CD14-positive monocyte (primary cell): ENCODE measurements at regions of chr13 and their contacts with region 1.

Region 1: GRCh38 chr13:41188584-41188983 is 5.8 kb downstream of the KBTBD7 start:
- DNase-seq: no peak
- H3K4me3 ChIP-seq: no peak overlapping the region
- H3K4me3 Mint-ChIP-seq: no peak overlapping the region
- H3K27ac ChIP-seq: no peak overlapping the region
- H3K27ac Mint-ChIP-seq: no peak overlapping the region
- H3K4me1 ChIP-seq: peaks cover 2 to 5% of the 10 kb centered on the region in 2 donors
- H3K4me1 Mint-ChIP-seq: peaks cover 19% of the 10 kb centered on the region
- H3K27me3 ChIP-seq: no peaks in the 10 kb centered on the region
- H3K27me3 Mint-ChIP-seq: no peaks in the 10 kb centered on the region
- CTCF ChIP-seq: no peak

Region 2: GRCh38 chr13:41145146-41145908 is 43.3 kb before region 1 on chr13:
- intact Hi-C with region 1: loop called in 1 of 2 experiments (anchors 5 kb)
- DNase-seq: no peak
- H3K4me3 ChIP-seq: no peak overlapping the region
- H3K4me3 Mint-ChIP-seq: no peak overlapping the region
- H3K27ac ChIP-seq: no peak overlapping the region
- H3K27ac Mint-ChIP-seq: no peak overlapping the region
- H3K4me1 ChIP-seq: no peaks in the 10 kb centered on the region
- H3K4me1 Mint-ChIP-seq: no peaks in the 10 kb centered on the region
- H3K27me3 ChIP-seq: no peaks in the 10 kb centered on the region
- H3K27me3 Mint-ChIP-seq: no peaks in the 10 kb centered on the region
- CTCF ChIP-seq: no peak